Activated CD8-positive, alpha-beta T cell treated with anti-CD3 and anti-CD28 coated beads, Interleukin-2, amount 10 ng/mL, durations not matched to agents 7 days and 5 days (primary cell): ENCODE measurements at regions of chr9 and their contacts with region 1.

Region 1: DNA sequence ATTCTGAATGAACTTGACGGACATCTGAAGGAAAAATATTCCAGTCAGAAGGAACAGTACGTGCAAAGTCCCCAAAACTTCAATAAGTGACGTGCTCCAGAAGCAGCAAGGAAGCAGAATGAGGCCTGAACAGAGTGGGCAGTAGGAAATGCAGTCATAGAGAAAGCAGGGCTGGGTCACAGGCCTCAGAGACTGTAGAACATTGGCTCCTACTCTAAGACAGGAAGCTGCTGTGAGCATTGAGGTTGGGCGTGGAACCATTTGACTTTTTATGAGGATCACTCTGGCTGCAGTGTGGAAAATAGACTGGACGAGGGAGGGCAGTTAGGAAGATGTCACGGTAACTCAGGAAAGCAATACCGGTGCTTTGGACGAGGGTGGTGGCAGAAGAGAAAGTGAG is 64.0 kb downstream of the DOCK8 start:
- DNase-seq: peak; percentile 78
- ATAC-seq: peak; percentile 67
- H3K4me3 Mint-ChIP-seq: no peak overlapping the region
- H3K27ac Mint-ChIP-seq: no peak overlapping the region
- H3K4me1 Mint-ChIP-seq: peaks cover 37% of the 10 kb centered on the region
- H3K27me3 Mint-ChIP-seq: no peaks in the 10 kb centered on the region

Region 2: DNA sequence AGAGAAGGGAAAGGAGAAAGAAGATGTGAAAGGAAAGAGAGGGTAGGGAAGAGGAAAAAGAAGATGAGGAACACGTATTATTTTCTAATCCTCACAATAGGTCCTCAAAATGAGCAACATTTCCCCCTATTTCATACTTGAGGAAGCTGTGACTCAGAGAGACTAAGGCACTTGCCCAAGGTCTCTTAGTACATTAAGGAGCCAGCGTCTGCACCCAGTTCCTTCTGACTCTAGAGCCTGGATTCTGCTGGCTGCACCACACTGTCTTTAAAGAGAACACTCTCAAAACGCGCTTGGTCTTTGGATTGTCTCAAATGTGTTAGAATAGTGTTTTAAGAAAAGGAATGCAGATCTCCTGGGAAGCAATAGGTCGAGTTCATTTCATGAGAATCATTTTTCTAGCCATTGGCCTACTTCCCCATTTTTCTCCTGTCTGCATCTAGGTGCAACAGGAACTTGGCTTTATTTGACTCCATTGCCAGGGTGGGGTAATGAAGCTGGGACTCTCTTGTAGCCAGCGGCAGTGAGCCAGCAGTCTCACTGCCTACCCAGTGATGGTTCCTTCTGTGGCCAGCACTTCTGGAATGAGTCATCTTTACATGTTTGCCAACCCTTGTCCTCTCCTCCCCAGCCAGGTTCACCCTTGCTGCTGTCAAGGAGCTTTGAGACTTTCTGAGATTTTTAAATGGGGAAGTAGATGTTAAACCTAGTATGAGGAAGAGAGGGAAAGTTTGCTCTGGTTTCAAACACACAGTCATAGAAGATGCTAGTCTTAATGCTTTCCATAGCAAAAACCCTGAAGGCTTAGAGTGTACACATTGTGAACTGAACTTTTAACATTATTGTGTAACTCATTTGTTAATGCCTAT is 18.7 kb after region 1 on chr9:
- CTCF ChIA-PET with region 1: interaction called, 4 read pairs
- POLR2A ChIA-PET with region 1: interaction called, 12 read pairs
- DNase-seq: peak; percentile 35
- ATAC-seq: peak; percentile 81
- H3K4me3 Mint-ChIP-seq: no peak overlapping the region
- H3K27ac Mint-ChIP-seq: peak overlapping the region; percentile 70
- H3K4me1 Mint-ChIP-seq: peaks cover 49% of the 10 kb centered on the region
- H3K27me3 Mint-ChIP-seq: no peaks in the 10 kb centered on the region